Common myeloid progenitor, CD34-positive (primary cell): ENCODE measurements at regions of chr12 and their contacts with region 1.

Region 1: GRCh38 chr12:54005853-54006686 is 2.7 kb upstream of the HOXC8 start:
- DNase-seq: peak; percentile 73 to 80 (median 79)
- H3K4me3 ChIP-seq: peak overlapping the region in 4 of 7 experiments; percentile 32 to 72 (median 60)
- H3K27ac ChIP-seq: no peak overlapping the region
- H3K4me1 ChIP-seq: peaks cover 0 to 13% (median 8%) of the 10 kb centered on the region in 4 experiments
- H3K27me3 ChIP-seq: peaks cover 16 to 98% (median 67%) of the 10 kb centered on the region in 5 experiments

Region 2: GRCh38 chr12:54191550-54192022 is 185.5 kb after region 1 on chr12:
- CTCF ChIA-PET with region 1: interaction called, 15 read pairs
- POLR2A ChIA-PET with region 1: no interaction called
- DNase-seq: peak; percentile 86 to 93 (median 86)
- H3K4me3 ChIP-seq: no peak overlapping the region
- H3K27ac ChIP-seq: no peak overlapping the region
- H3K4me1 ChIP-seq: peaks cover 4 to 17% (median 13%) of the 10 kb centered on the region in 4 experiments
- H3K27me3 ChIP-seq: peaks cover 14 to 67% (median 35%) of the 10 kb centered on the region in 5 experiments

Region 3: DNA sequence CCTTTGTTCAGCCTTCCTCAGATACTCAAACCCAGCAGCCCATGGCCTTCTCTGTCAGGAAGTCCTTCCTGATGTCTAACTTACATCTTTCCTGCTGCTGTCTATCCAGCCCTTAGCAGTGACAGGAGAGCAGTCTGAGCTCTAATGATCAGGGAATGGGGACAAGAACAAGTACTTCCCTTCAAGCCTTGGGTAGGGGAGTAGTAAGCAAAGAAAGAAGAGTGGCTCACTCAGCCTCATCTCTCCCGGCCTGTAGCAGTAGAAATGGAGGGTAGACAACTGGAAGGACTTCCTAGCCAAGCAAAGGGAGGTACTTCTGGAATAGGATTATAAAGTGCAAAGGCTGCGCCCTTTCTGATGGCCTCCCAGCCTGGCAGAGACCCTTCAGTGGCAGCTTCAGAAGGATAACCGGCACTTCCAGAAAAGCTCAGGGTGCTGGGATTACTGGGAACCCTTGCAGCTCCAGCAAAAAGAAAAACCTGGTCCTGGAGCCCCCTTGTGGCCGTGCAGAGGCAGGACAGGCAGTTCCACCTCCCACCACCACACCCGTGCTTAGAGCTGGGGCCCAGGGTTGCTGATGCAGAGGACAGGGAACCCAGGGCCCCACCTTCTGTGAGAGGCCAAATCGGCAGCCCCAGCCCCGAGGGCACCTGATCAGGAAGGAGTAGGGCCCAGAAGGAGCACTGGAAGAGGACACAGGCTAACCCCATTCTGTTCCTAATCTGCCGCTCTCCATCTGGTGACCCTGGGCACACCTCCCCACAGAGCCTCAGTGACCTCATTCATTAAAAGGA is 195.1 kb after region 1 on chr12:
- CTCF ChIA-PET with region 1: interaction called, 101 read pairs
- POLR2A ChIA-PET with region 1: no interaction called
- DNase-seq: peak; percentile 70 to 77 (median 75)
- H3K4me3 ChIP-seq: no peak overlapping the region
- H3K27ac ChIP-seq: no peak overlapping the region
- H3K4me1 ChIP-seq: peaks cover 3 to 8% (median 6%) of the 10 kb centered on the region in 4 experiments
- H3K27me3 ChIP-seq: peaks cover 4 to 78% (median 37%) of the 10 kb centered on the region in 5 experiments